Mammary epithelial cell (primary cell): ENCODE measurements at regions of chr16 and their contacts with region 1.

Region 1: GRCh38 chr16:4136229-4136813 is 20.1 kb upstream of the ADCY9 start:
- DNase-seq: peak; percentile 90
- H3K4me3 ChIP-seq: no peak overlapping the region
- H3K27ac ChIP-seq: peak overlapping the region; percentile 82
- H3K4me1 ChIP-seq: peaks cover 27% of the 10 kb centered on the region
- H3K27me3 ChIP-seq: no peaks in the 10 kb centered on the region
- CTCF ChIP-seq: peak; percentile 26 to 48

Region 2: GRCh38 chr16:4183237-4184036 is 47.1 kb after region 1 on chr16:
- CTCF ChIA-PET with region 1: no interaction called
- dilution Hi-C with region 1: no loop called
- in situ Hi-C with region 1: loop called in 1 of 2 experiments (anchors 5 kb)
- intact Hi-C with region 1: loop called (anchors 1 kb)
- DNase-seq: peak; percentile 92
- H3K4me3 ChIP-seq: peak overlapping the region; percentile 72 to 78 (median 73)
- H3K27ac ChIP-seq: peak overlapping the region; percentile 84
- H3K4me1 ChIP-seq: peaks cover 13% of the 10 kb centered on the region
- H3K27me3 ChIP-seq: no peaks in the 10 kb centered on the region
- CTCF ChIP-seq: no peak

Region 3: GRCh38 chr16:4293822-4294457 is 157.6 kb after region 1 on chr16:
- CTCF ChIA-PET with region 1: no interaction called
- dilution Hi-C with region 1: loop called (anchors 10 kb)
- in situ Hi-C with region 1: no loop called
- intact Hi-C with region 1: no loop called
- DNase-seq: peak; percentile 35
- H3K4me3 ChIP-seq: no peak overlapping the region
- H3K27ac ChIP-seq: no peak overlapping the region
- H3K4me1 ChIP-seq: peaks cover 39% of the 10 kb centered on the region
- H3K27me3 ChIP-seq: no peaks in the 10 kb centered on the region
- CTCF ChIP-seq: no peak